ENCODE measurements at regions of chr16 and their contacts with region 1.

Region 1: DNA sequence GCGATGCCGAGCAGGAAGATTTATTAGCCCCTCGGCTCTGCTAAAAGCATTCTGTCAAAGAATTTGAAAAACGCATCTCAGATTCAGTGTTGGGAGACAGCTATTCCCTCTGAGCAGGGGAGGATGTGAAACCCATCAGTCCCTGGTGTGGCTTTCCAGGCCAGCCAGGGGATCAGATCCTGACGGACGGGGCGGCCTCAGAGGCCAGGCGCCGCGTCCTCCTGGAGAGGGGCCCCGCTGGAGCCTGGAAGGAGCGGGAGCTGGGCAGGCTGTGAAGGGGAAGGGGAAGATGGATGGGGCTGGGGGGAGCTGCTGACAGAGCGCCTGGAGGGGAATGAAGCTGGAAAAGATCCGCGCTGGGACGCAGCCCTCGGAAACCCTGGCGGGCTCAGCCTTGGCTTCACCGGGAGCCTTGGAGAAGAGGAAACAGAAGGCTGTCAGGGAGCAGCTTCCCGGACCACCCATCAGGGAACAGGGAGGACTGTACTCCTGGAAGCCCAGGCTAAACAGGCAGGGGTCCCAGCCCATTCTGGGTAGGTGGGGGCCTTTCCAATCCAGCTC is 358.0 kb downstream of the C16orf95 start:
- DNase-seq: no peak
- H3K4me3 ChIP-seq: no peak overlapping the region
- H3K27ac ChIP-seq: no peak overlapping the region
- H3K4me1 ChIP-seq: peaks cover 0 to 4% (median 0%) of the 10 kb centered on the region in 4 experiments; a peak in 2 of 7 replicates
- H3K27me3 ChIP-seq: no peaks in the 10 kb centered on the region; a peak in 1 of 7 replicates
- CTCF ChIP-seq: no peak
- EP300 ChIP-seq: no peak
- POLR2A ChIP-seq: no peak
- RAD21 ChIP-seq: no peak

Region 2: GRCh38 chr16:86949116-86949515 is 10.1 kb before region 1 on chr16:
- CTCF ChIA-PET with region 1: interaction called, 10 read pairs
- POLR2A ChIA-PET with region 1: no interaction called
- DNase-seq: no peak
- H3K4me3 ChIP-seq: no peak overlapping the region
- H3K27ac ChIP-seq: no peak overlapping the region
- H3K4me1 ChIP-seq: peaks cover 0 to 11% (median 2%) of the 10 kb centered on the region in 4 experiments; a peak in 2 of 7 replicates
- H3K27me3 ChIP-seq: no peaks in the 10 kb centered on the region
- CTCF ChIP-seq: no peak
- EP300 ChIP-seq: no peak
- POLR2A ChIP-seq: no peak
- RAD21 ChIP-seq: no peak